ENCODE measurements at regions of chr11 and their contacts with region 1.

Region 1: GRCh38 chr11:108788565-108789199 is 123.8 kb downstream of the DDX10 start:
- DNase-seq: peak; percentile 58
- H3K4me3 ChIP-seq: no peak overlapping the region
- H3K27ac ChIP-seq: no peak overlapping the region
- H3K4me1 ChIP-seq: no peaks in the 10 kb centered on the region
- H3K27me3 ChIP-seq: no peaks in the 10 kb centered on the region
- CTCF ChIP-seq: peak; percentile 43 to 55
- POLR2A ChIP-seq: no peak

Region 2: GRCh38 chr11:108414958-108415357 is 373.7 kb before region 1 on chr11:
- CTCF ChIA-PET with region 1: no interaction called
- POLR2A ChIA-PET with region 1: no interaction called
- dilution Hi-C with region 1: no loop called
- intact Hi-C with region 1: no loop called
- DNase-seq: no peak
- H3K4me3 ChIP-seq: no peak overlapping the region
- H3K27ac ChIP-seq: no peak overlapping the region
- H3K4me1 ChIP-seq: no peaks in the 10 kb centered on the region
- H3K27me3 ChIP-seq: no peaks in the 10 kb centered on the region
- CTCF ChIP-seq: no peak
- POLR2A ChIP-seq: no peak

Region 3: DNA sequence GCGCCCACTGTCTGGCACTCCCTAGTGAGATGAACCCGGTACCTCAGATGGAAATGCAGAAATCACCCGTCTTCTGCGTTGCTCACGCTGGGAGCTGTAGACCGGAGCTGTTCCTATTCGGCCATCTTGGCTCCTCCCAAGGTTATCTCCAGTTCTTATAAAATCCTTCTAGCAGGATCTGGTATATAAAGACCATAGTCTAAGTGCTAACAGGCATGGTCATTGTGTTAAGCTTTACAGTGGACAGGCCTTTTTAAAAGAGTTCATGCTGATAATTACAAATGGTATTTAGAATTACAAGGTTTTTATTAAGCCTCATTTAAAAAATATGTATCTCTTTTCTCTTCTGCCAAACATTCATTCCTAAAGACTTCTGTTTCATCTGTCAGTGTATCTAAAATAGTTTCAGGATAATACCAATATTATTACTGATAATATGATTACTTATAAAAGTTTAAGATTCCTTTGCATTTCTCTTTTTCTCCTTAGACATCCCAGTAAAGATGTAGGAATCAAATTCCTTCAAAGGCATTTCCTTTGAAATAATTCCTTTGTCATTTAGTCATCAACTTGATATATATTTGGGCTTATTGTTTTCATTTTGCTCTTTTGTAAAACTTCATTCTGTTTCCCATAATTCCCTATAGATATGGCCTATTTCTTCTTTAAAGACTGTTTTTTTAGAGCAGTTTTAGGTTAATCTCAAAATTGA is 103.1 kb before region 1 on chr11:
- CTCF ChIA-PET with region 1: no interaction called
- POLR2A ChIA-PET with region 1: no interaction called
- dilution Hi-C with region 1: no loop called
- intact Hi-C with region 1: no loop called
- DNase-seq: peak; percentile 27
- H3K4me3 ChIP-seq: no peak overlapping the region
- H3K27ac ChIP-seq: peak overlapping the region; percentile 75
- H3K4me1 ChIP-seq: peaks cover 11% of the 10 kb centered on the region
- H3K27me3 ChIP-seq: no peaks in the 10 kb centered on the region
- CTCF ChIP-seq: no peak
- POLR2A ChIP-seq: no peak

Region 4: DNA sequence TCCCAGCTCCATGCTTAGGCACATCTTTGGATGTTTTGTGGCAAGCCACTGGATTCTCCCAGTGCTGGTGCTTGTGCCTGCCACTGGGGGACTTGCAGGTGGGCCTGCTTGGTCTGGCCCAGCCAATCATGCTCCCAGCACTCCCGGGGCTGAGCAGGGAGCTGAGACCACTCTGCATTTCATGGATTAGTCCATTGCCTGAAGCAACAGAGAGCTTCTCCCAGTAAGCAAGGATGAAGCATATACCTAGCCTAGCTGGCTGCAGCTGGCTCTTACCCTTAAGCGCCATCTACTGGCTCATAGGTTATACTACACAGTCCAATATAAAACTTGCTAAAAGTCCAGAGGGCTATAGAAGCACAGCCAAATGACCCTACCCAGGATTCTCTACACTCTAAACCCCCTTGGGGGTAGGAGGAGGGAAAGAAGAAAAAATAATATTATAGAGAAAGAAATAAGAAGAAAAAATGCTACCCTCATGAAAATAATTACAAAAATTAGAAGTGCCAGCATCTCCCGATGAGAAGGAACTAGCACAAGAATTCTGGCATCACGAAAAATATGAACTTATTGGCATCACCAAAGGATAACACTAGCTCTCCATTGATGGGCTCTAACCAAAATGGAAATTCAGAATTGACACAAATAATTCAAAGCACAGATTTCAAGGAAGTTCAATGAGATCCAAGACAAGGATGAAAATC is 908.6 kb after region 1 on chr11:
- CTCF ChIA-PET with region 1: interaction called, 15 read pairs
- POLR2A ChIA-PET with region 1: no interaction called
- dilution Hi-C with region 1: no loop called
- intact Hi-C with region 1: loop called (anchors 1 kb)
- DNase-seq: peak; percentile 44
- H3K4me3 ChIP-seq: no peak overlapping the region
- H3K27ac ChIP-seq: no peak overlapping the region
- H3K4me1 ChIP-seq: no peaks in the 10 kb centered on the region
- H3K27me3 ChIP-seq: no peaks in the 10 kb centered on the region
- CTCF ChIP-seq: peak; percentile 59 to 68
- POLR2A ChIP-seq: no peak